Dorsolateral prefrontal cortex (tissue), 120 donors: ENCODE measurements at regions of chr12 and their contacts with region 1.

Region 1: DNA sequence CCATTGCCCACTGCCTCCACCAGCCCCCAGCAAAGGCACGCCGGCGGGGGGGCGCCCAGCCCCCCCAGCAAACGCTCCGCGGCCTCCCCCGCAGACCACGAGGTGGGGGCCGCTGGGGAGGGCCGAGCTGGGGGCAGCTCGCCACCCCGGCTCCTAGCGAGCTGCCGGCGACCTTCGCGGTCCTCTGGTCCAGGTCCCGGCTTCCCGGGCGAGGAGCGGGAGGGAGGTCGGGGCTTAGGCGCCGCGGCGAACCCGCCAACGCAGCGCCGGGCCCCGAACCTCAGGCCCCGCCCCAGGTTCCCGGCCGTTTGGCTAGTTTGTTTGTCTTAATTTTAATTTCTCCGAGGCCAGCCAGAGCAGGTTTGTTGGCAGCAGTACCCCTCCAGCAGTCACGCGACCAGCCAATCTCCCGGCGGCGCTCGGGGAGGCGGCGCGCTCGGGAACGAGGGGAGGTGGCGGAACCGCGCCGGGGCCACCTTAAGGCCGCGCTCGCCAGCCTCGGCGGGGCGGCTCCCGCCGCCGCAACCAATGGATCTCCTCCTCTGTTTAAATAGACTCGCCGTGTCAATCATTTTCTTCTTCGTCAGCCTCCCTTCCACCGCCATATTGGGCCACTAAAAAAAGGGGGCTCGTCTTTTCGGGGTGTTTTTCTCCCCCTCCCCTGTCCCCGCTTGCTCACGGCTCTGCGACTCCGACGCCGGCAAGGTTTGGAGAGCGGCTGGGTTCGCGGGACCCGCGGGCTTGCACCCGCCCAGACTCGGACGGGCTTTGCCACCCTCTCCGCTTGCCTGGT is at the start of gene CDKN1B:
- DNase-seq: peak; percentile 79 to 92 (median 90)
- H3K4me3 ChIP-seq: peak within 1 kb of the TSS; percentile 54 to 100 (median 95)
- H3K27ac ChIP-seq: peak within 1 kb of the TSS; percentile 98 to 100 (median 100)
- H3K27me3 ChIP-seq: no peaks in the 10 kb centered on the region
- CTCF ChIP-seq: peak in 20 of 56 donors; percentile 6 to 41 (median 22)
- total RNA-seq, gene CDKN1B: 58.4 to 148 (median 88.8) TPM

Region 2: DNA sequence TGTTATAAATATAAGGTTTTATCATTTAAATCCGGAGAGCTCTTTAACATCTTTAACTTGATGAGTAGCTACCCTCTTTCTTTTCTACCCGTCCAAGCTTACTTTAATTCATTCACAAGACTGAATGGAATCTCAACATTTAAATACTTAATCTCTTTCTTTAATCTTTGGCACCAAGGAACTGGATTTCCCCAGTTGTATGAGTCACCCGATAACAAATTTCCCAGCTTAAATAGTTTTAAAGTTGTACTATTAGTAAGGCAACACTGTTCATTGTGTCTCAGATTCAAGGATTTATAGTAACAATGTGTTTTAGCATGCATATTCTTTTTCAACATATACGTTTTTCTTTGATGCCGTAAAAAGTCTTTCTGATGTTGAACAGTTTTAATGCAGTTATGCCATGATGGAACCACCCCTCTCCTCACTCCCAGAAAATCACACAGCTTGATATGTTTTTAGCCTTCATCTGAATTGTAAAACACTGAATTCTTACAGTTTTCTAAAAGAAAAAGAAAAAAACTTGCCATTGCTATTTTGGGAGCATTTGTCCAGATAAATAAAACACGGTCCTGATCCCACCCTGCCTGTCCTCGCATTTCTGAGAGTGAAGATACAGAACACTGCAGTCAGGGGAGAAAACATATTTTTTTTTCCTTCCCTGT is 434.1 kb before region 1 on chr12:
- intact Hi-C with region 1: no loop called
- DNase-seq: no peak
- H3K4me3 ChIP-seq: no peak overlapping the region
- H3K27ac ChIP-seq: no peak overlapping the region
- H3K27me3 ChIP-seq: no peaks in the 10 kb centered on the region
- CTCF ChIP-seq: no peak

Region 3: DNA sequence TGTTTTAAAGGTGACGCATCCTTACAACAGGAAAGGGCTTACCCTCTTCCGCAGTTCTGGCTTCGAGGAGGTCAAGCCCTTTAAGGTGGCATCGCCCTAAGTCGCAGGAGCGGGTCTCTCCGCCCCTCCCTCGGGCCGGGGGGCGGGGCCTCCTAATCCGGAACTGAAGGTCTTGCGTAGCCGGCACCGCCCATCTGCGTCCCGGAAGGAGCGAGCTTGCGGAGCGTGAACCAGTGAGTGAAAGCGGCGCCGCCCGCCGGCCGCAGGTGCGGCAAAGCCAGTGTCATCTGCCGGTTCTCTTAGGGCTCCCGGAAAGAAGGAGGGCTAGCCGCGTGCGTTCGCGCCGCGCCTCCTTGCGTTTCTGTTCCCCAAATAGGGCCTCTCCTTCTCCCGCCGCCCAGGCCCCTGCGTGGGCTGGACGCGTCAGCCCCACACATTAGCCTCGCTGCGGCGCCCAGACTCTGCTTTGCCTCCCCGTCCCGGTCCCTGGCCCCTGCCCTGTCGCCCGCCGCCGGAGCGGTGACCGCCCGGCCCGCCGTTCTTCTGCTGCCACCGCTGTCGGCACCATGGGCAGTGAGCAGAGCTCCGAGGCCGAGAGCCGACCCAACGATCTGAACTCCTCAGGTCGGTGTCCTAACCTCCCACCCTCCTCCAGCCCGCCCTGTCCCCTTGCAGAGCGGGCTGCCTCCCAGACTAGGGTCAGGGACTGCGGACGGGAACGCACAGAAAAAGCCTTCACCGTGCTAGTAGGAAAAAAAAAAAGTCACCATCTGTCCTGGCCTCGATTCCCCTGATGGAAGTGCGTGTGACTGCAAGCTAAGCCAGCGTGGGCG is 359.9 kb before region 1 on chr12 and contains the start of gene BORCS5:
- intact Hi-C with region 1: loop called (anchors 5 to 10 kb)
- DNase-seq: peak; percentile 97 to 98 (median 98)
- H3K4me3 ChIP-seq: peak within 1 kb of the TSS; percentile 60 to 99 (median 93)
- H3K27ac ChIP-seq: peak within 1 kb of the TSS; percentile 94 to 100 (median 100)
- H3K27me3 ChIP-seq: no peaks in the 10 kb centered on the region
- CTCF ChIP-seq: peak in 51 of 56 donors; percentile 13 to 70 (median 46)
- total RNA-seq, gene BORCS5: 30.7 to 69.8 (median 50.1) TPM

Region 4: DNA sequence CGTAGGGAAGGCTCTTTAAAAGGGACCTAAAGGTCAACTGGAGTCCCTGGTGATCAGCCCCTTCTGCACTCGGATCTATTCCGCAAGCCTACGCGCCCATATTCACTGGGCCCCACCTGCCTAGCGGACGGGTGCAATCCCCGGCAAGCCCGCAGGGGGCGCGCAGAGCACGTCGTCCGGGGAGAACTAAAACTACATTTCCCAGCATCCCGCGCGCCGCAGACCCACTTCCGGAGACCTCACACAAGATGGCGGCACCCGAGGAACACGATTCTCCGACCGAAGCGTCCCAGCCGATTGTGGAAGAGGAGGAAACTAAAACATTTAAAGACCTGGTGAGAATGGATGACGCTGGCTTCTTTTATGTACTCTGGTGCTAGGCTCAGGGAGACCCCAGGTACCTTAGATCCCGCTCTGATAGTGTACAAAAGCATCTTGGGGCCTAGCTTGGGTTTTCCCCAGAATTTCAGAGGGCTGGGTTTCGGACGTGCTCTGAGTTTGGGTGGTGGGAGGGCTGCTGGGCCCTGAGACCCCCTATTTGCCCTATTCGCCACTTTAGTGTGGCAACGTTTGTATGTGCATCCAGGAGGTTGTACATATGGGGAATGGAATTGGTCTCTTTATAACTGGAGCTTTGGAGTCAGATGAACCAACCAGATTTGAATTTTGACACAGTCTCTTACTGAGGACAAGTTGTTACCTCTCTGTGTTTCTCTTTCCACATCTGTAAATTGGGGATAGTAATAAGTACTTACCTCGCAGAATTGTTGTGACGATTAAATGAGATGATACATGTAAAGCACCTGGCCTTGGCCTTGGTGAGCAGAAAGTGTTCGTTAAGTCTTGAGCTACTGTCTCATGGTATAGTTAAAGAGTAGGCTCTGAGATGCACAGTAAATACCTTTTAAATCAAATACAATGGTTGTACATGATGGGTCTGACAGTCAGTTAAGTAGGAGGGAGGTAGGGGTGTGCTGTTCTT is 96.4 kb after region 1 on chr12 and contains the start of gene DDX47:
- intact Hi-C with region 1: no loop called
- DNase-seq: peak; percentile 90 to 97 (median 95)
- H3K4me3 ChIP-seq: peak within 1 kb of the TSS; percentile 65 to 100 (median 87)
- H3K27ac ChIP-seq: peak within 1 kb of the TSS in 53 of 59 donors; percentile 1 to 90 (median 67)
- H3K27me3 ChIP-seq: no peaks in the 10 kb centered on the region
- CTCF ChIP-seq: peak; percentile 13 to 100 (median 99)
- total RNA-seq, gene DDX47: 32.0 to 55.7 (median 42.2) TPM